ENCODE measurements at regions of chr15 and their contacts with region 1.

Region 1: GRCh38 chr15:91706322-91707032 is 147.0 kb upstream of the SLCO3A1 start:
- DNase-seq: peak; percentile 48
- H3K4me3 ChIP-seq: peak overlapping the region in 1 of 2 experiments; percentile 19; a peak in 1 of 4 replicates
- H3K27ac ChIP-seq: no peak overlapping the region
- H3K4me1 ChIP-seq: no peaks in the 10 kb centered on the region
- H3K27me3 ChIP-seq: no peaks in the 10 kb centered on the region
- CTCF ChIP-seq: peak; percentile 89
- EP300 ChIP-seq: no peak
- RAD21 ChIP-seq: peak; percentile 74

Region 2: DNA sequence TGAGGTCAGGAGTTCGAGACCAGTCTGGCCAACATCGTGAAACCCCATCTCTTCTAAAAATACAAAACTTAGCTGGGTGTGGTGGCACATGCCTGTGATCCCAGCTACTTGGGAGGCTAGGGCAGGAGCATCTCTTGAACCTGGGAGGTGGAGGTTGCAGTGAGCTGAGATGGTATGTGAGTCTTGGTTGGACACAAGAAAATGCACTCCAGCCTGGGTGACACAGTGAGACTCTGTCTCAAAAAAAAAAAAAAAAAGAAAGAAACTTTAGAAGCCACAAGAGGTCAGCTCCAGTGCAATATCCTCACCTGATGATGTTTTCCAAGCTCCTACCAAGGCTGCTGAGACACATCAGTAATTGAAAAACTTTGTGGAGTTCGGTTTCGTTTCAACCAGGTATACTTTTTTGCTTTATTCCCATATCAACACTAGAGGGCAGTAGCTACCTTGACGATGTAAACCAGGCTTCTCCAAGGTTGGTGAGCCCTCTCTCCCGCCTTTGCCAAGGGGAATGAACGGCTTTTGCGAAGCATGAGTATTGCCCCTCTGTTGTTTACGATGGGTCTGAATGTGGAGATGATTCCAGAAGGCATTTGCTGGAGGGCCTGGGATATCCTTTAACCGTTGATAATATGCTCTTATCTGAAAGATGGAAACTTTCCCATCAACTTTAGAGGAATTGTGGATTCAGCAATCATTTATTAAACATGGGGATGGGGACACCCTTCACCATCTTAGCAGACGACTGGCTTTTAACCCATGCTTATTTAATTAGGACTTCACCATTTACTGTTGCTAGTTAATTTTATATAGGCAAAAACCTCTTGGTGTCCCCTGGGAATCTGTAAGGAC is 403.7 kb before region 1 on chr15:
- CTCF ChIA-PET with region 1: interaction called, 15 read pairs
- POLR2A ChIA-PET with region 1: no interaction called
- DNase-seq: peak; percentile 83
- H3K4me3 ChIP-seq: peak overlapping the region in 1 of 2 experiments; percentile 16; a peak in 1 of 4 replicates
- H3K27ac ChIP-seq: no peak overlapping the region
- H3K4me1 ChIP-seq: peaks cover 0 to 4% of the 10 kb centered on the region in 2 experiments; a peak in 3 of 4 replicates
- H3K27me3 ChIP-seq: peaks cover 10% of the 10 kb centered on the region
- CTCF ChIP-seq: peak; percentile 80
- EP300 ChIP-seq: no peak
- RAD21 ChIP-seq: peak; percentile 99

Region 3: GRCh38 chr15:91660174-91660653 is 46.3 kb before region 1 on chr15:
- CTCF ChIA-PET with region 1: interaction called, 13 read pairs
- POLR2A ChIA-PET with region 1: no interaction called
- DNase-seq: peak; percentile 11
- H3K4me3 ChIP-seq: no peak overlapping the region
- H3K27ac ChIP-seq: no peak overlapping the region
- H3K4me1 ChIP-seq: peaks cover 0 to 5% of the 10 kb centered on the region in 2 experiments; a peak in 1 of 4 replicates
- H3K27me3 ChIP-seq: no peaks in the 10 kb centered on the region
- CTCF ChIP-seq: no peak
- EP300 ChIP-seq: no peak
- RAD21 ChIP-seq: 0 out of 2 replicates have a peak, but pooled peaks have one; percentile 19

Region 4: GRCh38 chr15:91716536-91716935 is 10.1 kb after region 1 on chr15:
- CTCF ChIA-PET with region 1: interaction called, 19 read pairs
- POLR2A ChIA-PET with region 1: no interaction called
- DNase-seq: no peak
- H3K4me3 ChIP-seq: no peak overlapping the region
- H3K27ac ChIP-seq: no peak overlapping the region
- H3K4me1 ChIP-seq: no peaks in the 10 kb centered on the region
- H3K27me3 ChIP-seq: no peaks in the 10 kb centered on the region; the same call in 1 of the 2 replicates
- CTCF ChIP-seq: no peak
- EP300 ChIP-seq: no peak
- RAD21 ChIP-seq: no peak

Region 5: GRCh38 chr15:91731483-91731882 is 25.0 kb after region 1 on chr15:
- CTCF ChIA-PET with region 1: interaction called, 19 read pairs
- POLR2A ChIA-PET with region 1: no interaction called
- DNase-seq: no peak
- H3K4me3 ChIP-seq: no peak overlapping the region
- H3K27ac ChIP-seq: no peak overlapping the region
- H3K4me1 ChIP-seq: no peaks in the 10 kb centered on the region
- H3K27me3 ChIP-seq: no peaks in the 10 kb centered on the region
- CTCF ChIP-seq: no peak
- EP300 ChIP-seq: no peak
- RAD21 ChIP-seq: no peak

Region 6: DNA sequence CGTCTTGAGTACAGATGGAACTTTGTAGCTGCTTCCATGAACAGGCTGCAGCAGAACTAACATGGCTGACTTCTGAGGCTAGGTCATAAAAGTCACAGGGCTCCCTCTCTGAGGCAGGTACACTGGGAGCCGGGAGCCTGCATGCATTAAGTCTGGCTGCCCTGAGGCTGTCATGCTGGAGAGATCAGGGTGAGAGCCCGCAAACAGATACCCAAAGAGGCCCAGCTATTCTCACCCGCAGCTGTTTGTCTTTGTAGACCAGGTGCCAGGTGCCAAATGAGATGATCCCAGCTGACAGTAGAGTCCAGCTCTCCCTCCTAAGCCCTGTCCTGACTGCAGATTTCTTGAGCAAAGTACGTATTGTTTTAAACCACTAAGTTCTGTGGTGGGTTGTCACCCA is 138.5 kb after region 1 on chr15:
- CTCF ChIA-PET with region 1: interaction called, 11 read pairs
- POLR2A ChIA-PET with region 1: no interaction called
- DNase-seq: no peak
- H3K4me3 ChIP-seq: no peak overlapping the region
- H3K27ac ChIP-seq: no peak overlapping the region
- H3K4me1 ChIP-seq: no peaks in the 10 kb centered on the region
- H3K27me3 ChIP-seq: no peaks in the 10 kb centered on the region
- CTCF ChIP-seq: no peak
- EP300 ChIP-seq: no peak
- RAD21 ChIP-seq: no peak

Region 7: GRCh38 chr15:92077353-92078085 is 371.0 kb after region 1 on chr15:
- CTCF ChIA-PET with region 1: interaction called, 49 read pairs
- POLR2A ChIA-PET with region 1: no interaction called
- DNase-seq: peak; percentile 74
- H3K4me3 ChIP-seq: no peak overlapping the region; a peak in 1 of 4 replicates
- H3K27ac ChIP-seq: no peak overlapping the region
- H3K4me1 ChIP-seq: peaks cover 0 to 16% of the 10 kb centered on the region in 2 experiments; a peak in 2 of 4 replicates
- H3K27me3 ChIP-seq: no peaks in the 10 kb centered on the region
- CTCF ChIP-seq: peak; percentile 80
- EP300 ChIP-seq: no peak
- RAD21 ChIP-seq: peak; percentile 94

Measured in SK-N-SH (cell line).